ENCODE measurements at regions of chr6 and their contacts with region 1.

Region 1: DNA sequence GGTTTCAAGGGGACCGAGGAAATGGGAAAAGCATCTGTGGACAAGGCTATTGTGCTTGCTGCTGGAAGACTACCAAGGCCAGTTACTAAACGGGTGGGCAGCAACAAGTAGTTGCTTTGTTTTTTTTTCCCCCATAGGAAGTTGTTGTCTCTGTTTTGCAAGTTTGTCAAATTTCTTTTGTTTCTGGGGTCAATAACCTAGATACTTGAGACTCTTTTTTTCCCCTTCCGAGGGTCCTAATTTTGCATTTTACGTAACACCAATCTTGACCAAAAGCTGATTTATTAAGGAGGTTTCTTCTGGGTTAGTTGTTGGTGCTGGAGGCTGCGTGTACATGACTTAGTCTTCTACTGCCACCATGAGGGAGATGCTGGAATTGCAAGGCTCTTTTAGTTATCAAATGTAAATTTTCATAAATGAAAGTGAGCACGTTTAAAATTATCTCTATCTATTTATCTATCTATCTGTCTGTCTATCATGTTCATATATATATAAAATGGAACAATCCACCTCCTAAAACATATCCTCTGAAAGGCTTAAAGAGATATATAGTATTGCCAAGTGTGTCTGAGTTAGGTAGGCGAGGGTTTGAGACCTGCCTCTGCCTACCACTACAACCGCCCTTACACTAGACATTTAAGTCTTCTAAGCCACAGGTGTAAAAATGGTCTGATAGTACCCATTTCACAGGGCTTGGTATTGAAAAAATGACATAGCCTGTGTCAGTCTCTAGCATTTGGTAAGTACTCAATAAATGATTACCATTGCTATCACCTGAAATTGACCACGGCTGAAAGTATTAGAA is 60.2 kb downstream of the GCLC start:
- DNase-seq: peak; percentile 67
- ATAC-seq: peak; percentile 76
- H3K4me3 ChIP-seq: no peak overlapping the region
- H3K27ac ChIP-seq: no peak overlapping the region
- H3K4me1 ChIP-seq: peaks cover 17% of the 10 kb centered on the region
- H3K27me3 ChIP-seq: no peaks in the 10 kb centered on the region; a peak in 1 of 5 replicates
- CTCF ChIP-seq: peak; percentile 87
- EP300 ChIP-seq: no peak
- POLR2A ChIP-seq: no peak
- RAD21 ChIP-seq: peak; percentile 86

Region 2: GRCh38 chr6:52407467-52407866 is 1077.2 kb before region 1 on chr6:
- CTCF ChIA-PET with region 1: no interaction called
- POLR2A ChIA-PET with region 1: no interaction called
- in situ Hi-C with region 1: no loop called
- intact Hi-C with region 1: loop called (anchors 2 kb)
- DNase-seq: peak; percentile 68
- ATAC-seq: peak; percentile 84
- H3K4me3 ChIP-seq: no peak overlapping the region
- H3K27ac ChIP-seq: no peak overlapping the region
- H3K4me1 ChIP-seq: 0 out of 2 replicates have a peak, but pooled peaks cover 15% of the 10 kb centered on the region
- H3K27me3 ChIP-seq: no peaks in the 10 kb centered on the region
- CTCF ChIP-seq: peak; percentile 67
- EP300 ChIP-seq: no peak
- POLR2A ChIP-seq: no peak
- RAD21 ChIP-seq: peak; percentile 66; the same call in 1 of the 2 replicates

Region 3: GRCh38 chr6:53103992-53104675 is 380.5 kb before region 1 on chr6:
- CTCF ChIA-PET with region 1: interaction called, 9 read pairs
- POLR2A ChIA-PET with region 1: no interaction called
- in situ Hi-C with region 1: loop called (anchors 5 kb)
- intact Hi-C with region 1: loop called (anchors 1 kb)
- DNase-seq: peak; percentile 74
- ATAC-seq: peak; percentile 83
- H3K4me3 ChIP-seq: no peak overlapping the region
- H3K27ac ChIP-seq: no peak overlapping the region
- H3K4me1 ChIP-seq: peaks cover 10% of the 10 kb centered on the region; the same call in 1 of the 2 replicates
- H3K27me3 ChIP-seq: no peaks in the 10 kb centered on the region
- CTCF ChIP-seq: peak; percentile 71
- EP300 ChIP-seq: no peak
- POLR2A ChIP-seq: no peak
- RAD21 ChIP-seq: peak; percentile 36; the same call in 1 of the 2 replicates

Region 4: DNA sequence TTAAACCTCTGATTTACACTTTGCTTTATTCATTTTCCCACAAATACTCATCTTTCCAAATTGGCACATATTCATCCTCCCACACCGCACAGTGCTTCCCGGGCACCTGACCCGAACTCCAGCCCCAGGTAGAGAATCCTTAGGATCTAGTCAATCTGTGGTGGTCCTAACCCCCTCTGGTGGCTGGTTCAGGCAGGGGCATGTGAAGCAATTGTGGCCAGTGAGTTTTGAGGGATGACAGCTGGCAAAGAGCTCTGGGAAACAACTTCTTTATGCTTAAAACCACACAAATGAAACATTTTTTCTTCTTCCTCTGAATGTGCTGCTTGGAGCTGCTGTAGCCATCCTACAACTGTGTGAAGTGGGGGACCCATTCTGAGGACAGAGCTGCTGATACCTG is 190.6 kb before region 1 on chr6:
- CTCF ChIA-PET with region 1: no interaction called
- POLR2A ChIA-PET with region 1: no interaction called
- in situ Hi-C with region 1: no loop called
- intact Hi-C with region 1: loop called (anchors 5 kb)
- DNase-seq: peak; percentile 31
- ATAC-seq: peak; percentile 69
- H3K4me3 ChIP-seq: no peak overlapping the region
- H3K27ac ChIP-seq: no peak overlapping the region
- H3K4me1 ChIP-seq: peaks cover 14% of the 10 kb centered on the region
- H3K27me3 ChIP-seq: no peaks in the 10 kb centered on the region
- CTCF ChIP-seq: peak; percentile 71
- EP300 ChIP-seq: no peak
- POLR2A ChIP-seq: no peak
- RAD21 ChIP-seq: no peak

Region 5: DNA sequence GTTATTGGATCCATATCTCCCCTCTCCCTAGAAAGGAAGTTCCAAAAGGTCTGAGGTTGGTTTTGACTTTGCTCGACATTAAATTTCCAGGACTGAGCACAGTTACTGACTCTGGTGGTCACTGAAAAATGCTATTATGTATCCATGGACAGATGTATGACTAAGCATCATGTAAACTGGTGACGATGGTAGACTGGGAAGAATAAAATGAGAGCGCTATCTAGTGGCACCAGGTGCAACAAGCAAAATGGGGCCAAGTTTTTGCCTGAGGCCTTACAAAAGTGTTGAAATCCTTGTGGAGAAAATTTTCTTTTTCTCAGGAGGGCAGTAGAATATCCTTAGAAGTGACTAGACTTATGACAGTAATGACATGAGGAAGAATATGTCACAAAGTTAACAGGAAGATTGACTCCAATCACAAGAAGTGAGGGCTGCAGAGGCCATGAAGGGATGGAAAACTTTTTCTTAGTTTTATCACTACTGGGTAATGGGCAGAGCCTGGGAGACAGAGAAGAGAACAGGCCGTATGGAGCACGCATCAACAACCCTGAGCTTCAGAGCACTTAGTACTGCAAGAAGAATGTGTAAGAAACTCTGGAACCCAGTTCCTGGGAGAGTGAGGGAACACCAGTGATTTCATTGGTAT is 47.0 kb before region 1 on chr6:
- CTCF ChIA-PET with region 1: interaction called, 8 read pairs
- POLR2A ChIA-PET with region 1: no interaction called
- in situ Hi-C with region 1: no loop called
- intact Hi-C with region 1: loop called (anchors 1 kb)
- DNase-seq: peak; percentile 71
- ATAC-seq: peak; percentile 79
- H3K4me3 ChIP-seq: no peak overlapping the region
- H3K27ac ChIP-seq: no peak overlapping the region
- H3K4me1 ChIP-seq: peaks cover 27% of the 10 kb centered on the region
- H3K27me3 ChIP-seq: 0 out of 5 replicates have a peak, but pooled peaks cover 0 to 5% of the 10 kb centered on the region in 2 experiments
- CTCF ChIP-seq: peak; percentile 88
- EP300 ChIP-seq: no peak
- POLR2A ChIP-seq: no peak
- RAD21 ChIP-seq: peak; percentile 90

Region 6: DNA sequence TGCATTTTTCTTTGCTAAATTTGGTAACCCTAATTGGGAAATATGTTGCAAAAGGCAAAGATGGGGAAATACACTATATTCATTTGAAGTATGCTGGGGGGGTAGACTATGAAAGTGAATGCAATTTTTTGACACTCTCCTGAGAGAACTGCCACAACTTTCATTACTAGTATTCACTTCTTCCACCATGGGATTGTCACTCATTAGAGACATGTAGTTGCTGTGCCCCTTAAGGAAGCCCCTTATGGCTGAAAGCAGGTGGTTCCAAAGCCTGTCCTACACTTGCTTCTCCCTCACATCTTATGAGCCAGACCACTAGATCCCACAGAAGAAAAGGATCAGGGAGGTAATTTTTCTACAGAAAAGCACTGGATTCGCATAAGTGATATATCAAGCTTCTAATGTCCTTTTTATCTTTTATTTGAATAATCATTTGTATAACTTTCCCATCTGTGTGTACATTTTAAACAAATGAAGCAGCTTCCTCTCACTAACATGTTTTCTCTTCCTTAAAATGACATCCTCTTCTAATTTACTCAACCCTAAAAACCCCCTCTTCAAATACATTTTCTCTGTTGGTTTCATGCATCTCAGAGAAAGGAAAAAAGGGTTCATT is 23.5 kb before region 1 on chr6:
- CTCF ChIA-PET with region 1: no interaction called
- POLR2A ChIA-PET with region 1: no interaction called
- in situ Hi-C with region 1: no loop called
- intact Hi-C with region 1: no loop called
- DNase-seq: no peak
- ATAC-seq: no peak
- H3K4me3 ChIP-seq: no peak overlapping the region
- H3K27ac ChIP-seq: no peak overlapping the region
- H3K4me1 ChIP-seq: peaks cover 14% of the 10 kb centered on the region
- H3K27me3 ChIP-seq: peaks cover 0 to 12% of the 10 kb centered on the region in 2 experiments; a peak in 3 of 5 replicates
- CTCF ChIP-seq: no peak
- EP300 ChIP-seq: no peak
- POLR2A ChIP-seq: no peak
- RAD21 ChIP-seq: no peak